Activated CD4-positive, alpha-beta memory T cell treated with anti-CD3 and anti-CD28 coated beads for 36 hours (primary cell): ENCODE measurements at regions of chr2 and their contacts with region 1.

Region 1: GRCh38 chr2:32277674-32278482 is at the start of gene YIPF4:
- DNase-seq: peak; percentile 93
- H3K4me3 Mint-ChIP-seq: peak within 1 kb of the TSS; percentile 85
- H3K27ac Mint-ChIP-seq: peak within 1 kb of the TSS; percentile 87
- H3K4me1 Mint-ChIP-seq: peaks cover 22% of the 10 kb centered on the region
- H3K27me3 Mint-ChIP-seq: no peaks in the 10 kb centered on the region
- total RNA-seq, gene YIPF4: 43.5 to 44.3 TPM

Region 2: GRCh38 chr2:32192418-32192817 is 85.5 kb before region 1 on chr2:
- CTCF ChIA-PET with region 1: no interaction called
- POLR2A ChIA-PET with region 1: no interaction called
- intact Hi-C with region 1: no loop called
- DNase-seq: no peak
- H3K4me3 Mint-ChIP-seq: no peak overlapping the region
- H3K27ac Mint-ChIP-seq: no peak overlapping the region
- H3K4me1 Mint-ChIP-seq: peaks cover 27% of the 10 kb centered on the region
- H3K27me3 Mint-ChIP-seq: no peaks in the 10 kb centered on the region

Region 3: DNA sequence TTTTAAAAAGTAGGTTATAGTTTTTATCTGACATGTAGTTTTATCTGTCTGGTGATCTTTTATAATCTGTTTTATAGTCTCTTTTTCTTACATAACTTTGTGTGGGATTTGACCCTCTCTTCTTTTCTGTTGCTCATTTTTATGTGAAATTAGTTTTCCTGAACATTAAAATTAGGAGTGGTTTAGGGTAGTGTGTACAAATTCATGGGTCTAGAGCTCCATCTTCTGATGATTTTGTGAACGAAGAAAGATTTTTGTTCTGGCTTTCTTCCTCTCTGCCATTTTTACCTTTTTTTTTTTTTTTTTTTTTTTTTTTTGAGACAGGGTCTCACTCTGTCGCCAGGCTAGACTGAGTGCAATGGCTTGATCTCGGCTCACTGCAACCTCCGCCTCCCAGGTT is 65.6 kb before region 1 on chr2:
- CTCF ChIA-PET with region 1: no interaction called
- POLR2A ChIA-PET with region 1: no interaction called
- intact Hi-C with region 1: no loop called
- DNase-seq: no peak
- H3K4me3 Mint-ChIP-seq: no peak overlapping the region
- H3K27ac Mint-ChIP-seq: no peak overlapping the region
- H3K4me1 Mint-ChIP-seq: no peaks in the 10 kb centered on the region
- H3K27me3 Mint-ChIP-seq: no peaks in the 10 kb centered on the region

Region 4: DNA sequence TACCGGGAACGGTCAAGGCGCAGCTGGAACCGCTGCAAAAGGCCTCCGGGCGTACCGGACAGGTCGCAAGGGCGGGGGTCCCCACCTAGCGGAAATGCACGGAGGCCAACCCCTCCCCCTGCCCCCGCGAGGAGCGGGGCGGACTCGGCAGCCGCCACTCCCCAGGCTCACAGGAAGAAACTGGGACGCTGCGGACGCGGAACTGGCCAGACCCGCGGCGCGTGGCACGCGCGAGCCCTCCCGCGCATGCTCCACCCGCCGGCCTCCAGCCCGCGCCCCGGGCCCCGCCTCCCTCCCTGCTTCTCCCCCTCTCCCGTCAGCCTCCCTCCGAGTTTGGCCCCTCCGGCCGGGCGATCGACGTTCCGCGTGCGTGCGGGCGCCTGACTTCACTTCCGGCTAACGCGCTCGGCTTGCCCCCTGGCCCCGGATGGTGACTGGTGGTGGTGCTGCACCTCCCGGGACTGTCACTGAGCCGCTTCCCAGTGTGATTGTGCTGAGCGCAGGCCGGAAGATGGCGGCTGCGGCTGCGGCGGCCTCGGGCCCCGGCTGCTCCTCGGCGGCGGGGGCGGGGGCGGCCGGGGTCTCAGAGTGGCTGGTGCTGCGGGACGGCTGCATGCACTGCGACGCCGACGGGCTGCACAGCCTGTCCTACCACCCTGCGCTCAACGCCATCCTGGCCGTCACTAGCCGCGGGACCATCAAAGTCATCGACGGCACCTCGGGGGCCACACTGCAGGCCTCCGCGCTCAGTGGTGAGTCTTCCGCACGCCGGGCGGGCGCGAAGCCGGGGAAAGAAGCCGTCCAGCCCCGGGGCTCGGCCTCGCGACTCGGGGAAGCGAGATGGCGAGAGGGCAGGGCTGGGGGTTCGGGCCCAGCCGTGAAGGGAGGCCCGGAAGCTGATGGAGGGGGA is 79.1 kb after region 1 on chr2 and contains the start of gene BIRC6:
- CTCF ChIA-PET with region 1: no interaction called
- POLR2A ChIA-PET with region 1: interaction called, 3 read pairs
- intact Hi-C with region 1: loop called (anchors 2 kb)
- DNase-seq: peak; percentile 99
- H3K4me3 Mint-ChIP-seq: peak within 1 kb of the TSS; percentile 84
- H3K27ac Mint-ChIP-seq: peak within 1 kb of the TSS; percentile 92
- H3K4me1 Mint-ChIP-seq: peaks cover 39% of the 10 kb centered on the region
- H3K27me3 Mint-ChIP-seq: no peaks in the 10 kb centered on the region
- total RNA-seq, gene BIRC6: 58.2 to 62.4 TPM

Region 5: DNA sequence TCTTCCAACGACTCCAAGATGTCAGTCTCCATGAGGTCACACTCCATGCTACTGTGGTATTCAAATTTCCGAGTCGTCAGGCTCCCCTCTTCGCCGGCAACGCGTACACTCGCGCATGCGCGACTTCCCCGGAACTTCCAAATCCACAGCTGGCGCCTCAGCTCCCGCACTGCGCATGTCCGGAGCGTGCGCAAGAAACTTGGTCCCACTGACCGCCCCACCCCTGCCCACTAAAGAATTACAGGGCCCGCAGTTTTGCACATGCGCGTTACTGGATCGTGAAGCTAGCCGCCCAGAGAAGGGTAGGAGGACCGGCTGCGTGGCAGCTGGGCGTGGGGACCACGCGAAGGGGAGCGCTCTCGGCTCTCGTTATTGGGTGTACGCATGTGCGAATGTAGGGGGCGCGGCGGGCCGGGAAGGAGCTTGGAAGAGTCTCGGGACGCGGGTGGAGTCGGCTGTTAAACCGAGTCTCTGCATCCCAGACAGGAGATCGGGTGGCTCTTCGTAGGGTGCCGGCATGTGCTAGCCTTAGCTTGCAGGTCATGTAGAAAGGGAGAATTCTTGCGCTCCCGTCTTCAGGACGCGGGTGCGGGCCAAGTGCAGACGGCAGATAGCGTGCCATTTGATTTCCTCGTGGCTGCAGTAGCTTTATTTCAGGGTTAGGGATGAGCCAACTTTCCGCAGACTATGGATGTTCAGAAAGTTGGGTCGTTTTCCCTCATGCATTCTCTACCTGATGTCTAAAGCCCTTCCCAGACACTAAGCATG is 1321.5 kb after region 1 on chr2 and contains the start of gene FAM98A:
- CTCF ChIA-PET with region 1: no interaction called
- POLR2A ChIA-PET with region 1: no interaction called
- intact Hi-C with region 1: loop called (anchors 1 kb)
- DNase-seq: peak; percentile 99
- H3K4me3 Mint-ChIP-seq: peak within 1 kb of the TSS; percentile 90
- H3K27ac Mint-ChIP-seq: peak within 1 kb of the TSS; percentile 82
- H3K4me1 Mint-ChIP-seq: peaks cover 22% of the 10 kb centered on the region
- H3K27me3 Mint-ChIP-seq: no peaks in the 10 kb centered on the region
- total RNA-seq, gene FAM98A: 46.7 to 46.8 TPM